ENCODE measurements at regions of chr7 and their contacts with region 1.

Region 1: DNA sequence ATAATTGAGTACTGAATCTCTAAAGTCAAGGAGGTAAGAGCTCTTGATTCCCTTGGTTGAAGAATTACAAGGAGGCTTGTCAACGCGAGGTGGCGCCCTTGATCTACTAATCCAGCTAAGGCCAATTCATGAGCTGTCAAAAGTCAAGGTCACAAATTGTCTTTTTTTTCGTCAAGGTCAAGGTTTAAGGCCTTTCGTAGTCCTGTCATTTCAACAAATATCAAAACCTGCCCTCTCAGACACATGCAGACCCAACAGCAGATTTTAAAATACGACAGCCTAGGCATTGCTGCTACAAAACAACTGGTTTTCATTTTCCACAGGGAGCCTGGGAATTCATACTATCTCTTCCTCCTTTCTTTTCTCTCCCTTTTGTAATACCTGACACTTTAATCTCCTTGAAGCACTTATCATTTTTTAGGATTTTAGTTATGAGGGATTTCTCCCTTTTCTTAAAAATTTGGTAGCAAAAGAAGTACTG is 3.6 kb downstream of the HOXA13 start:
- DNase-seq: peak; percentile 89
- H3K4me3 Mint-ChIP-seq: no peak overlapping the region
- H3K27ac Mint-ChIP-seq: no peak overlapping the region
- H3K4me1 Mint-ChIP-seq: peaks cover 10% of the 10 kb centered on the region
- H3K27me3 Mint-ChIP-seq: peaks cover 40% of the 10 kb centered on the region
- CTCF ChIP-seq: peak; percentile 93

Region 2: GRCh38 chr7:27548304-27548703 is 352.0 kb after region 1 on chr7:
- CTCF ChIA-PET with region 1: interaction called, 10 read pairs
- intact Hi-C with region 1: no loop called
- DNase-seq: no peak
- H3K4me3 Mint-ChIP-seq: no peak overlapping the region
- H3K27ac Mint-ChIP-seq: no peak overlapping the region
- H3K4me1 Mint-ChIP-seq: peaks cover 9% of the 10 kb centered on the region
- H3K27me3 Mint-ChIP-seq: no peaks in the 10 kb centered on the region
- CTCF ChIP-seq: no peak

Region 3: DNA sequence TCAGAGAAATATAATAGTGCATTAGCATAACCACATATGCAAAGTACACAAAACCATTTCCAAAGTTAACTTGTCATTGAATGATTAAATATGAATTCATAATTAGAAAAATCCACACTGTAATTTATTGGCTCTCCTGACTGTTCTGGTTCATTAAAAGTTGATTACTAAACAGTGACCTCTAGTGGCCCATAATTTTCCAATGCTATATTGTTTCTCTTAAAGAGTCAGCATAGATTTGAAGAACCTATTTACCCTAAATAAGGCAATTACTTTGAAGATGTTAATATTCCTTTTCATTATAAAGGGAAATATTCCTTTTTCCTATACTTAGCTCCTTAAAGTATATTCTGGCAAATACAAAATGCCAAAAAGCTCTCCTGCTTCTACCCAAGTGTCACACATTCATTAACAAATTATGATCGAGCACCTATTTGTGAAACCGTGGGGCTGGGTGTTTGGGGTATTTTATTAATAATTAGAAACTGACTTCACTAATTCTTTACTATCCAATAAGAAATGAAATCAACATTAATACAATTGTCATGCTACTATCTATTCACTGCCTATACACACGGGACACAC is 380.1 kb after region 1 on chr7:
- CTCF ChIA-PET with region 1: interaction called, 6 read pairs
- intact Hi-C with region 1: loop called (anchors 1 kb)
- DNase-seq: peak; percentile 34
- H3K4me3 Mint-ChIP-seq: no peak overlapping the region
- H3K27ac Mint-ChIP-seq: no peak overlapping the region
- H3K4me1 Mint-ChIP-seq: peaks cover 15% of the 10 kb centered on the region
- H3K27me3 Mint-ChIP-seq: no peaks in the 10 kb centered on the region
- CTCF ChIP-seq: peak; percentile 42

Region 4: DNA sequence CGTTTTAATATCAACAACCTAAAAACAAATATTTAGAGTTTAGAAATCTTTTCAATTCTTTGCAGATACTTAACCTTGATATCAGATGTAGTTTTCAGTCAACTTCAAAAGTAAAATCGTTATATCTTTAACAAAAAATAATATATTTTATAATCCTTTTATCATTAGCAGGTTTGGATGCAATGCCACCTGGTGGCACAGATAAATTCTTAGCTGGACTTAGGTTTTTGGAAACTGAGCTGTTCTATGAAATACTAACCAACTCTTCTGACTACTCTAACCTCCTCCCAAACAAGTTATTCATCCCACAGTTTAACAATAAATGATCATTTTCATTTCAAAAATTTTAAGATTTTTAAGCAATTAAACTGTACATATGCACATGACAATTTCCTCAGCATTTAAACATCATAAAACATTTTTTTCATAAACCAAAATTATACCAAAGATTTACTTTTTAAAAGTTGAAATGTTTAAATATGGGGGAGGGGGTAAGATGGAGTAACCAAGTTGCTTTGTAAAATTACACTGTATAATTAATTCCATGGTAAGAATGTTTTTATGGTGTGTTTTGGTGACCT is 409.5 kb after region 1 on chr7:
- CTCF ChIA-PET with region 1: interaction called, 45 read pairs
- intact Hi-C with region 1: loop called (anchors 2 kb)
- DNase-seq: peak; percentile 35
- H3K4me3 Mint-ChIP-seq: peak overlapping the region; percentile 9
- H3K27ac Mint-ChIP-seq: peak overlapping the region; percentile 55
- H3K4me1 Mint-ChIP-seq: peaks cover 26% of the 10 kb centered on the region
- H3K27me3 Mint-ChIP-seq: no peaks in the 10 kb centered on the region
- CTCF ChIP-seq: peak; percentile 62

Region 5: DNA sequence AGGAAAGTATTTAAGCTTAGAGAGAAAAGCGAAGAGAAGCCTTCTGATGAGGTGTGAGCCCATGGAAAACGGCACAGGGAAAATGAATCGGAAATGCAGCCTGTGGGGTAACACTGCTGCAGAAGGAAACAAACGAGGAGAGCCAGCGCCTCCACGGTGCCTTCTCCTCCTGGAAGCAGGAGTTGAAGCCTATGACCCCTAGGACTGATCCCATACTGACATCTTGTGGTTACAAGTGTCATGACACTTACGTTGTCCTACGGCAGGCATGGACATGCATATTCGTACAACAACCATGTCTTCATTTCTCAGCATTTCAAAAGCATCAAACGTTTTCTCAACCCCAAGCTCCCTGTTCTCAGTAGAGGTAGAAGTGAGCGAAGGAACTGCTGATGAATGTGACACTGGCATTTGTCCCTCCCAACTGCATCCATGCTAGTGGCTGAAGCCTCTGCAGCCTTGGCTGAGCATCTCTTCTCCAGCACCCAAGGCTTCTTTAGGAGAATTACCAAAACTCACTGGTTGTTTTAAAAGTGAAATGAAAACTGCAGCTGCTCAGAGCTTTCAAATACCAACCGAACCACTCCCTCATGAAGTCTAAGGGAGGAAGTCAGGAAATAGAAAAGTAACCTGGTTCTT is 824.1 kb after region 1 on chr7:
- CTCF ChIA-PET with region 1: no interaction called
- intact Hi-C with region 1: loop called (anchors 1 kb)
- DNase-seq: peak; percentile 75
- H3K4me3 Mint-ChIP-seq: no peak overlapping the region
- H3K27ac Mint-ChIP-seq: no peak overlapping the region
- H3K4me1 Mint-ChIP-seq: peaks cover 9% of the 10 kb centered on the region
- H3K27me3 Mint-ChIP-seq: no peaks in the 10 kb centered on the region
- CTCF ChIP-seq: peak; percentile 84

Region 6: GRCh38 chr7:28096713-28097112 is 900.4 kb after region 1 on chr7:
- CTCF ChIA-PET with region 1: interaction called, 12 read pairs
- intact Hi-C with region 1: no loop called
- DNase-seq: peak; percentile 68
- H3K4me3 Mint-ChIP-seq: no peak overlapping the region
- H3K27ac Mint-ChIP-seq: no peak overlapping the region
- H3K4me1 Mint-ChIP-seq: no peaks in the 10 kb centered on the region
- H3K27me3 Mint-ChIP-seq: no peaks in the 10 kb centered on the region
- CTCF ChIP-seq: peak; percentile 87